ENCODE measurements at regions of chr11 and their contacts with region 1.

Region 1: GRCh38 chr11:114399490-114400216 is 658 bp downstream of the C11orf71 start:
- DNase-seq: peak; percentile 81
- ATAC-seq: peak; percentile 69

Region 2: GRCh38 chr11:114280696-114281095 is 119.0 kb before region 1 on chr11:
- intact Hi-C with region 1: loop called (anchors 10 kb)
- DNase-seq: peak; percentile 71
- ATAC-seq: peak; percentile 70

Region 3: DNA sequence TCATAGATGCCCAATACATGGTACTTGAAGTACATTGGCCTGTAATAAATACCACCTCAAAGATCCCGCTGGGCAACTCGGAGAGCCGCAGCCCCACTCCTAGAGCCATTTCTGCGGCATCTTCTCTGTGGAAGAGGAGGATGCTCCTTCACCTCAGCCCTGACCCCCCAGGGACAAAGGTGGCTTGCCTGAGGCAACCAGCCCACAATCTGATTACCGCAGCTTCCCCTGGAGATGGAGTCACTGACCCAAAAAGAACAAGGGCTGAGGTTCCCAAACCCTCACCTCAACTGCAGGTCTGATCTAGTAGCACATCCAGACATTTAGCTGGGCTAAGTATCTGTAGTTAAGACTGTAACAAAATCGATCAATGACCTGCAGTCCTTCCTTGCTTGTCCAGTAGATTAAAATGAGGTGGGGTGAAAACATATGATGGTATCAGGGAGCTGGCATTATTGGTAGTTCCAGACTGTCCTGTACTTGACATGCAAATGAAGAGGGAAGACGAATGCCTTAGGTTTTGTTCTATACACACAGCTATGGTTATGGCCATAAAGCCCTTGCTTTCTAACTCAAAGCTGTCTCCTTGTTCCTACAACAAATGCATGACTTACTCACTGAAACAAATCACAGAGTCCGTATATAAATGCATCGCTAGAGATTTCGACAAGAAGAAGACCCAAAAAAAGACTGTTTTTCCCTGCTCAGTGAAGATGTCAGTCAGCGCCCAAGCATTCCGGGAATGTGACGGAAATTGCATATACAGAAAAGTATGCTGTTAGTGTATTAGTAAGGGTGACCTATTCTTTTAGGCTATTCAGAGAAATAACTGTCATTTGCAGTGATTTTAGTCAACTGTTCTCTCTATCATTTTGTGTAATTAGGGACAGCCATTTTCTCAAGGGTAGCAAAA is 33.1 kb before region 1 on chr11:
- intact Hi-C with region 1: no loop called
- DNase-seq: no peak
- ATAC-seq: no peak

Measured in Right ventricle myocardium superior (tissue), 1 donor.